Activated T-helper 1 cell treated with anti-CD3 and anti-CD28 coated beads, Interleukin-12 subunit alpha, Interleukin-12 subunit beta, Interleukin-2, Interleukin-4 antibody, amounts not matched to agents 30 ng/mL and 10 ng/mL and 1 ng/mL, durations not matched to agents 14 hours and 24 hours and 36 hours (primary cell): ENCODE measurements at regions of chr10 and their contacts with region 1.

Region 1: GRCh38 chr10:7121154-7121810 is 289.6 kb downstream of the SFMBT2 start:
- DNase-seq: peak; percentile 37
- H3K4me3 Mint-ChIP-seq: no peak overlapping the region
- H3K27ac Mint-ChIP-seq: peak overlapping the region; percentile 38
- H3K4me1 Mint-ChIP-seq: peaks cover 6% of the 10 kb centered on the region
- H3K27me3 Mint-ChIP-seq: peaks cover 36% of the 10 kb centered on the region

Region 2: DNA sequence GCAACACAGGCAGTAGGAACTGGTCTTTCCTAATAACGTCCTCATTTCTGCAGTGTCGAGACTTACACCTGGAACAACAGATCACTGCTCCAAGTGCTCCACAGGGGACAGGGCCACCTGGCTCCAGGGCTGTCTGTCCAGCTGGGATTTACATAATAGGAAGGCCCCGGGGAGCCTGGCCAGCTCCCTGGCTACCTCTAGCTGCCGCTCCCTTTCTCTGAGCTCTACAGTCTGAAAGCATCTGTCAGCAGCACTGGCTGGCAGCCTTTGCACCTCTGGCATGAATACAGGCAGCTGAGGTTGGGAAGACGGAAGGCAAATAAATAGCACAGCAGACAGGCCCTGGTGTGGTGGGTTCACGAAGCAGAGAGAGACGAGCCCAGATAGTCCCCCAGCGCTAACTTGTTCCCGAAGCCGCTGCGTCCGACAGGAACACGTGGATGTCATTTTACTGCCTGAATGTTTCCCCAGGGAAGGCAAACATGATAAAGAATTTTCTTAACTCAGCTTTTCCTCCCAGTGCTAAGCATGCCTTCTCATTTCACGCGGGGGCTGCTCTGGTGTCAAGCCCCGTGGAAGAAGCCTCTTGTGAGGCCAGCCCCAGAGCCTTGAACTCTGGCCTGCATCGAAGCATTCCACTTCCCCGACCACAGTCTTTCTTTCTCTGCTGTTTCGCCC is 440.1 kb after region 1 on chr10:
- intact Hi-C with region 1: no loop called
- DNase-seq: no peak
- H3K4me3 Mint-ChIP-seq: no peak overlapping the region
- H3K27ac Mint-ChIP-seq: no peak overlapping the region
- H3K4me1 Mint-ChIP-seq: no peaks in the 10 kb centered on the region
- H3K27me3 Mint-ChIP-seq: peaks cover 2% of the 10 kb centered on the region

Region 3: DNA sequence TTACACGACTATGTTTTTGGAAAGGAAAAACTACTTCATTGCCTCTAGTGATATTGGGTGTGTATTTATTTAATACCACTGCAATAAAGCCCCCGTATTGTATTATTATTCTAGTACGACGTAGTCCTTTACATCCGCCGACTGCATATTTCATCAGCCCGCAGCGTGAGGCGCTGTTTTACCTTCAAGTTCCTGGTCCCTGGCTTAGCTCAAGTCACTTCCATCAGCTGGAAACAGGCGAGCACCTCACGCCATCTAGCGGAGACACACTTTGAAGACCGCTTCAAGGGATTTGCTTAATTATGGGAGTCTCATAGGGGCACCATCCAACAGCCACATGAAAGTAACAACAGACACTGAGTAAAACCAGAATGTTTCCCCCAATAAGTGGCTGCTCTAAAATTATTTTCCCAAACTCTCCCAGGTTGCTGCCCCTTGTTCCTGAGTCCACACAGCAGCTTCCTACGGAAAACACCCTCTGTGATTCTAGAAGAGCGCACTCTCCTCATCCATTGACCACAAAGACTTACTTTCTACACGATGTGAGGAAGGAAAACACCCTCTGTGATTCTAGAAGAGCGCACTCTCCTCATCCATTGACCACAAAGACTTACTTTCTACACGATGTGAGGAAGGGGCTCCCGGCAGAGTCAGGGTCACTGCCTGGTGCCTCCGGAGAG is 566.1 kb after region 1 on chr10:
- intact Hi-C with region 1: loop called (anchors 1 kb)
- DNase-seq: peak; percentile 66
- H3K4me3 Mint-ChIP-seq: no peak overlapping the region
- H3K27ac Mint-ChIP-seq: no peak overlapping the region
- H3K4me1 Mint-ChIP-seq: peaks cover 19% of the 10 kb centered on the region
- H3K27me3 Mint-ChIP-seq: peaks cover 28% of the 10 kb centered on the region